ENCODE measurements at regions of chrX and their contacts with region 1.

Region 1: GRCh38 chrX:13653022-13653693 is at the start of gene TCEANC:
- DNase-seq: peak; percentile 79
- ATAC-seq: peak; percentile 93
- H3K4me3 Mint-ChIP-seq: peak within 1 kb of the TSS; percentile 91
- H3K27ac Mint-ChIP-seq: peak within 1 kb of the TSS; percentile 91
- H3K4me1 Mint-ChIP-seq: peaks cover 13% of the 10 kb centered on the region
- H3K27me3 Mint-ChIP-seq: no peaks in the 10 kb centered on the region
- CTCF ChIP-seq: no peak
- total RNA-seq, gene TCEANC: 5.1 and 5.9 TPM in 2 replicates

Region 2: DNA sequence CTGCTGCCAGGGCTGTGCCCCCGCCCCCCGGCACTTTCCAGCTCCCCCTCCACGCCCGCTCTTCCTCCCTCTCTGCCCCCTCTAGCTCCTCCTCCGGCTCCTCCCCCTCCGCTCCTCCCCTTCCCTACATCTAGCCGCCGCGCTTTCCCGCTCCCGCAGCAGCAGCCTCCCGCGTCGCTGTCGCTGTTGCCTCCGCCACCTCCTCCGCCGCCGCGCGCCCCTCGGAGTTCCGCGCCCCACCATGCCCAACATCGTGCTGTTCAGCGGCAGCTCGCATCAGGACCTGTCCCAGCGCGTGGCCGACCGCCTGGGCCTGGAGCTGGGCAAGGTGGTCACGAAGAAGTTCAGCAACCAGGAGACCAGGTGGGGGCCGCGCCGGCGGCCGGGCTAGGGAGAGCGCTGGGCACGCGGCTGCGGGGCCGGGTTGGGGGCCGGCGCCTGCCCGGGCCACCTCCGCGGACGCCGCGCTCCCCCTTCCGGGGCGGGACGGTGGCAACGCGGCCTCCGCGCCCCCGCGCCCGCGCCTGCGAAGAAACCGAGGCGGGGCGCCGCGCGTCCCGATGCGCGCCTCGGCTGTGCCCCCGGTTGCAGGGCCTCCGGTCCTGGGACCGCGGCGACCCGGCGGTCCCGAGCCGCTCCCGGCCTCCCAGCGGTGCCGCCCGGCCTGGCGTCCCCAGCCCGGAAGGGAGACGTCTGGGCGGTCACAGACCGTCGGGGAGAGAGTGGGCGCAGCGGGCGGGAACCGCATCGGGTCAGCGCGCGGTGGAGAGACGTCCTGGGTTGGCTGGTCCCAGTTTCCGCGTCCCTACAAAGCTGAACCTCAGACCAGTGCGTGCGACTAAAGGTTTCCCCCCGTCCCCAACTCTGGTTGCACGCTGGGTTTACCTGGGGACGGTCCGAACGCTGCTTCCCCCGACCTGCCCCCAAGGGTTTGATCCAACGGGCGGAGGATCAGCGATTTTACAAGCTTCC is 861.6 kb before region 1 on chrX and contains the start of gene PRPS2:
- CTCF ChIA-PET with region 1: no interaction called
- POLR2A ChIA-PET with region 1: no interaction called
- intact Hi-C with region 1: loop called (anchors 5 kb)
- DNase-seq: peak; percentile 59
- ATAC-seq: peak; percentile 92
- H3K4me3 Mint-ChIP-seq: peak within 1 kb of the TSS; percentile 86
- H3K27ac Mint-ChIP-seq: peak within 1 kb of the TSS; percentile 76
- H3K4me1 Mint-ChIP-seq: peaks cover 23% of the 10 kb centered on the region
- H3K27me3 Mint-ChIP-seq: no peaks in the 10 kb centered on the region
- CTCF ChIP-seq: no peak
- total RNA-seq, gene PRPS2: 33.9 and 37.7 TPM in 2 replicates

Region 3: DNA sequence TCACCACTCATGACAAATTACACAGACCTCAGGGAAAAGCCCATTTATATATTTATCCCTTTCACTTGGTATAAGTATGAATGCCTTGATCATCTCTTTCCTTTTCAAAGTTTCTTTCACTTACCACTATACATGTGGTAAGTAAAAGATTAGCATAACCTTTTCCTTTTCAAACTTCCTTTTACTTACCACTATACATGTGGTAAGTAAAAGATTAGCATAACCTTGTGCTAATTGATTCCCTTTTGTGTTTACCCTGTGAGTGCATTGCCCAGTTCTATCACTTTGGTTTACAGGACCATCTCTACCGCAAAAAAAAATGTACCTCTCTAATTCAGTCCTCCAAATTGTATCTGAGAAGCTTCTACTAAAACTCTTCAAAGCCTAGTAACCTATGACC is 33.0 kb before region 1 on chrX:
- CTCF ChIA-PET with region 1: no interaction called
- POLR2A ChIA-PET with region 1: no interaction called
- intact Hi-C with region 1: no loop called
- DNase-seq: no peak
- ATAC-seq: no peak
- H3K4me3 Mint-ChIP-seq: no peak overlapping the region
- H3K27ac Mint-ChIP-seq: no peak overlapping the region
- H3K4me1 Mint-ChIP-seq: no peaks in the 10 kb centered on the region
- H3K27me3 Mint-ChIP-seq: no peaks in the 10 kb centered on the region
- CTCF ChIP-seq: no peak

Region 4: GRCh38 chrX:13764765-13765164 is 111.6 kb after region 1 on chrX:
- CTCF ChIA-PET with region 1: no interaction called
- POLR2A ChIA-PET with region 1: no interaction called
- intact Hi-C with region 1: no loop called
- DNase-seq: no peak
- ATAC-seq: no peak
- H3K4me3 Mint-ChIP-seq: no peak overlapping the region
- H3K27ac Mint-ChIP-seq: no peak overlapping the region
- H3K4me1 Mint-ChIP-seq: peaks cover 30% of the 10 kb centered on the region
- H3K27me3 Mint-ChIP-seq: no peaks in the 10 kb centered on the region
- CTCF ChIP-seq: no peak

Measured in activated B cell treated with CpG ODN at 0.5 μM for 24 hours (primary cell).